ENCODE measurements at regions of chr7 and their contacts with region 1.

Region 1: DNA sequence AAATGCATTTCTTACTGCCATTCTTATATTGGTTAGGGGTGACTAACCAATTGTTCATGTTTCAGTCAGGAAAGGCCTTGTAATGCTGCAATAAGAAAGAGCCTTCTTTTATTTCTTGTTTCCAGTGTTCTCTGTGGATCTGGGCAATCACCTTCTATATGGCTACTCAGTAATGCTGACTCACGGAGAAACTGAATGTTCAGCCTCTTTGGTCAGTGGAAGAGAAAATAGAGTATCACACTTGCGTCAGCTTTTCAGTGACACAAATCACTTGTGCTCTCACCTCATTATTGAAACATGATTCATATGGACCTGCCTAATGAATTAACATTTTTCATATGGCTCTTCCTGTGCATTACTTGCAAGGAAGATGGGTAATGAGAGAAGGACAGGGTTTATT is 243.9 kb upstream of the POT1 start:
- DNase-seq: no peak

Region 2: GRCh38 chr7:125195156-125195555 is 21.6 kb after region 1 on chr7:
- intact Hi-C with region 1: loop called (anchors 1 kb)
- DNase-seq: no peak